ENCODE measurements at regions of chr4 and their contacts with region 1.

Region 1: GRCh38 chr4:87848622-87849351 is 16.0 kb downstream of the MEPE start:
- DNase-seq: peak; percentile 58
- H3K4me3 ChIP-seq: peak overlapping the region; percentile 24 to 38; a peak in 3 of 4 replicates
- H3K27ac ChIP-seq: no peak overlapping the region
- H3K4me1 ChIP-seq: peaks cover 0 to 3% of the 10 kb centered on the region in 2 experiments; a peak in 2 of 4 replicates
- H3K27me3 ChIP-seq: no peaks in the 10 kb centered on the region
- CTCF ChIP-seq: peak; percentile 70
- EP300 ChIP-seq: no peak
- RAD21 ChIP-seq: peak; percentile 66

Region 2: GRCh38 chr4:87865288-87865687 is 16.5 kb after region 1 on chr4:
- CTCF ChIA-PET with region 1: interaction called, 13 read pairs
- POLR2A ChIA-PET with region 1: no interaction called
- DNase-seq: no peak
- H3K4me3 ChIP-seq: no peak overlapping the region
- H3K27ac ChIP-seq: no peak overlapping the region
- H3K4me1 ChIP-seq: no peaks in the 10 kb centered on the region
- H3K27me3 ChIP-seq: no peaks in the 10 kb centered on the region
- CTCF ChIP-seq: no peak
- EP300 ChIP-seq: no peak
- RAD21 ChIP-seq: no peak

Region 3: GRCh38 chr4:87961993-87962392 is 113.2 kb after region 1 on chr4:
- CTCF ChIA-PET with region 1: interaction called, 24 read pairs
- POLR2A ChIA-PET with region 1: no interaction called
- DNase-seq: no peak
- H3K4me3 ChIP-seq: no peak overlapping the region
- H3K27ac ChIP-seq: no peak overlapping the region
- H3K4me1 ChIP-seq: no peaks in the 10 kb centered on the region
- H3K27me3 ChIP-seq: no peaks in the 10 kb centered on the region
- CTCF ChIP-seq: no peak
- EP300 ChIP-seq: no peak
- RAD21 ChIP-seq: no peak

Region 4: DNA sequence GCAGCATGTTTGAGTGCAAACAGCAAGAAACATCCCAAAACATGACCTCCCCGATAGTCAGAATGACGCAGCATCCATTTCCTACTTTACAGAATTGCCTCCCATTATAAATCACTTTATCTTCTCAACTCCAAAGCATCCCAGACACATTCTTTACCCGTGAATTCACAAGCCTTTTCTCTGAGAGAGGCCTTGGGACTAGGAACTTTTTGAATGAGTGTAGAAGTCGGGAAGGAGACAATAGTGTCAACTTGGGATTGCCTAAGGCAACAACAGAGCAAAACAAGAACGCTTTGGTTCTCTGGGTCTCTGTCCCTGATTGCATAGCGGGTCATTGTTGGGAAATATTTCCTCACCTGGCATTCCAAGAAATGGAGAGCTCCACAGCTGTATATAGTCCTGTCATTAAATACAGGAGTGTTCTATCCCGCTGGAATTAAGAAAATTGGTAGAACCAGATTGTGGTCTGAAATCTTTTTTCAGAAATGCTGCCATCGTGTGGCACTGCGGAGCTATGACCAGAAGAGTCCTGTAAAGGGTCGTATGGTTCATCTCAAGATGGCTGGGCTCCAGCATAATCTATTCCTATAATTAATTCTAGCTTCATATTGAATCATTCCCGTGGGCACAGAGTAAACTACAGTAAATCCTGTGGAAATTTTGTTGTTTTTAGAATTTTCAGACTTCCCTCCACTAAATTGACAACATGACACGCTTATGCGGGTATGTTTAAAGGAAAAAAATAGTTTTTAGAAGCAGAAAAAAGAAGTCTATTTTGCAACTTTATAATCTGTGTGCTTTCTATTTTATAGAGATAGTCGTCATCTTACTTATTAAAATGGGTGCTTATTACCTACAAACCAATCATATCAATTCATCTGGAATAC is 124.7 kb after region 1 on chr4:
- CTCF ChIA-PET with region 1: interaction called, 182 read pairs
- POLR2A ChIA-PET with region 1: no interaction called
- DNase-seq: peak; percentile 66
- H3K4me3 ChIP-seq: peak overlapping the region; percentile 29 to 36; a peak in 3 of 4 replicates
- H3K27ac ChIP-seq: peak overlapping the region in 1 of 2 experiments; percentile 69; a peak in 2 of 4 replicates
- H3K4me1 ChIP-seq: no peaks in the 10 kb centered on the region; a peak in 1 of 4 replicates
- H3K27me3 ChIP-seq: peaks cover 10% of the 10 kb centered on the region; the same call in 1 of the 2 replicates
- CTCF ChIP-seq: peak; percentile 88
- EP300 ChIP-seq: no peak
- RAD21 ChIP-seq: peak; percentile 77